Kidney (tissue), 22 donors: ENCODE measurements at regions of chr18 and their contacts with region 1.

Region 1: GRCh38 chr18:23183411-23184155 is 48.3 kb downstream of the CABLES1 start:
- DNase-seq: no peak
- H3K4me3 ChIP-seq: no peak overlapping the region
- H3K27ac ChIP-seq: no peak overlapping the region
- H3K4me1 ChIP-seq: peaks cover 0 to 9% (median 2%) of the 10 kb centered on the region in 3 donors
- H3K27me3 ChIP-seq: no peaks in the 10 kb centered on the region
- CTCF ChIP-seq: no peak

Region 2: GRCh38 chr18:23231340-23232021 is 47.9 kb after region 1 on chr18:
- intact Hi-C with region 1: loop called (anchors 10 kb)
- DNase-seq: peak in 2 of 5 donors; percentile 27 to 84
- H3K4me3 ChIP-seq: no peak overlapping the region
- H3K27ac ChIP-seq: peak overlapping the region; percentile 56 to 74
- H3K4me1 ChIP-seq: peaks cover 0 to 42% (median 20%) of the 10 kb centered on the region in 3 donors
- H3K27me3 ChIP-seq: no peaks in the 10 kb centered on the region
- CTCF ChIP-seq: no peak